Right cardiac atrium (tissue), 5 donors: ENCODE measurements at regions of chr9 and their contacts with region 1.

Region 1: GRCh38 chr9:70066874-70067273 is 23.2 kb downstream of the MAMDC2 start:
- DNase-seq: no peak
- ATAC-seq: no peak
- H3K4me3 ChIP-seq: no peak overlapping the region
- H3K27ac ChIP-seq: no peak overlapping the region
- H3K4me1 ChIP-seq: peaks cover 3% of the 10 kb centered on the region
- H3K27me3 ChIP-seq: no peaks in the 10 kb centered on the region

Region 2: DNA sequence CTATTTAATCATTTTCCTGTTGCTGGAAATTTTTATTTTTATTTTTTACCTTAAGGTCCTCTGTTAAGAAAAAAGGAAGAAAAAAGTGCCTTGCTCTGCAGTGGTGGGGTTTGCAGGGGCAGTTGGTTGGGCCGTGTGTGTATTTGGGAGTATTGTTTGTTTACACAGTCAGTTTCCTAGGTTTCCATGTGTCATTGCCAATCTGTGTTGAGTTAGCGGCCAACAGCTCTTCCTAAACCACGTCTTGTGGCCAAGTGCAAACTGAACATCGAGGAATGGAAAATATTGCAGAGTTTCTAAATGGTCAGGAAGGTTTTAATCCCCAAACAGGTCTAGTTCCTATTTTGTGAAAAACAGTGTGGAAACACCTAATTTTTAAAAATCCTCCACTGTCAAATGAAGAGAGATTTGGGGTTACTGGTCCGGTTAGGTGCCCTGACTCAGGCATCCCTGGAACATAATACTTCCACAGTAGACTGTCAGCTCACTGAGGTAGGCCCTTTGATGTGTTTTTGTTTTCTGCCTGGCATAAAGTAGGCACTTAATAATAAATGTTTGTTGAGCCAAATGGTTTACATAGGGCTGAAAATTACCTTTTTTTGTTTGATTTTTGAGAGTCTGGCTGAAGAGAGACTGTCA is 13.7 kb after region 1 on chr9:
- intact Hi-C with region 1: loop called in 1 of 4 experiments (anchors 2 kb)
- DNase-seq: peak; percentile 44 to 74 (median 68)
- ATAC-seq: peak; percentile 94 to 95
- H3K4me3 ChIP-seq: no peak overlapping the region
- H3K27ac ChIP-seq: peak overlapping the region; percentile 71
- H3K4me1 ChIP-seq: peaks cover 9% of the 10 kb centered on the region
- H3K27me3 ChIP-seq: no peaks in the 10 kb centered on the region

Region 3: DNA sequence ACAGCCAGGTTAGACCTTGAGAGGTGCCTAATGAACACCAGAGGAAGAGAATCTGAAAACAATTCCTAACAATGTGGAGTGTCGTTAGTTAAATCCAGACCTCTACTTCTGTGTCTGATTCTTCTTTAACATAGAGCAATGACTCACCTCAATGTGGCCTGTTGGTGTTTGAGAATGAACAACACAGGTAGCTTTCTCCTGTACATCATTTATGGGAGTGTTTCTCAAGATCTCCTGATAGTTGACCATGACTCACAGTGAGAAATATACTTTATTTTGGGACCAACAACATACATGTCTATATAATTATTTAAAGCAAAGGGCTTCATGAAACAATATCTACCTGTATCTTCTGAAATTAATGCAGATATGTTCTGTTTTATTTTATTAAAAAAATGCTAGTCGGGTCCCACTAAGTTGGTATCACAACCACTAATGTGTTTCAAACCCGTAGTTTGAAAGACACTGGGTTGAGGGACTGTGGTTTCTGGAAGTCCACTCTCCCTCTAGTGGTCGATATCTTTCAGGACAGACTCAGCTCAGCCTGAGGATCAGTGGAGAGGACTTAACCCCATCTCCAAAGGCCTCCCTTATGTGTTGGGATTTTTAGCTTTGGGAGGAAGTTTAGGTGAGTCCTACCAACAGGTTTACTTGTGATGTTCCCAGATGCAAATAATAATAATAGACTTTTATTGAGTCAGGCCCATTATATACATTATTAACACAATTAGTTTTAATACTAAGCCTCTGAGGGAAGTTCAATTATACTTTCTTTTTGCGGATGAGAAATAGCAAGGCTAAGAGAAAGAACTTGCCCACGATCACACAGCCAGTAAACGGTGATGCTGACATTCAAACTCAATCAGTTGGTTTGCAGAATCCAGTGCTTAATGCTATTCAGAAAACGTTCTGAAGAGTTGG is 417.6 kb after region 1 on chr9:
- intact Hi-C with region 1: no loop called
- DNase-seq: no peak
- ATAC-seq: peak; percentile 59 to 75
- H3K4me3 ChIP-seq: no peak overlapping the region
- H3K27ac ChIP-seq: peak overlapping the region; percentile 74
- H3K4me1 ChIP-seq: peaks cover 35% of the 10 kb centered on the region
- H3K27me3 ChIP-seq: no peaks in the 10 kb centered on the region